Activated CD8-positive, alpha-beta T cell treated with anti-CD3 and anti-CD28 coated beads for 36 hours (primary cell): ENCODE measurements at regions of chr7 and their contacts with region 1.

Region 1: GRCh38 chr7:1503816-1504775 is at the start of gene INTS1:
- DNase-seq: peak; percentile 91
- ATAC-seq: peak; percentile 90
- H3K4me3 Mint-ChIP-seq: peak within 1 kb of the TSS; percentile 89
- H3K27ac Mint-ChIP-seq: peak within 1 kb of the TSS; percentile 91
- H3K4me1 Mint-ChIP-seq: peaks cover 35% of the 10 kb centered on the region
- H3K27me3 Mint-ChIP-seq: no peaks in the 10 kb centered on the region
- CTCF ChIP-seq: peak; percentile 84
- total RNA-seq, gene INTS1: 100 to 103 TPM

Region 2: GRCh38 chr7:1532483-1533424 is 28.7 kb after region 1 on chr7:
- CTCF ChIA-PET with region 1: no interaction called
- POLR2A ChIA-PET with region 1: interaction called, 13 read pairs
- intact Hi-C with region 1: no loop called
- DNase-seq: peak; percentile 74
- ATAC-seq: peak; percentile 51
- H3K4me3 Mint-ChIP-seq: peak overlapping the region; percentile 91
- H3K27ac Mint-ChIP-seq: peak overlapping the region; percentile 92
- H3K4me1 Mint-ChIP-seq: peaks cover 24% of the 10 kb centered on the region
- H3K27me3 Mint-ChIP-seq: no peaks in the 10 kb centered on the region
- CTCF ChIP-seq: no peak